MCF 10A (cell line): ENCODE measurements at regions of chr2 and their contacts with region 1.

Region 1: GRCh38 chr2:58081000-58081399 is 34.4 kb downstream of the VRK2 start:
- DNase-seq: no peak
- H3K4me3 Mint-ChIP-seq: no peak overlapping the region
- H3K27ac Mint-ChIP-seq: no peak overlapping the region
- H3K4me1 Mint-ChIP-seq: peaks cover 9% of the 10 kb centered on the region
- H3K27me3 Mint-ChIP-seq: no peaks in the 10 kb centered on the region
- CTCF ChIP-seq: no peak

Region 2: DNA sequence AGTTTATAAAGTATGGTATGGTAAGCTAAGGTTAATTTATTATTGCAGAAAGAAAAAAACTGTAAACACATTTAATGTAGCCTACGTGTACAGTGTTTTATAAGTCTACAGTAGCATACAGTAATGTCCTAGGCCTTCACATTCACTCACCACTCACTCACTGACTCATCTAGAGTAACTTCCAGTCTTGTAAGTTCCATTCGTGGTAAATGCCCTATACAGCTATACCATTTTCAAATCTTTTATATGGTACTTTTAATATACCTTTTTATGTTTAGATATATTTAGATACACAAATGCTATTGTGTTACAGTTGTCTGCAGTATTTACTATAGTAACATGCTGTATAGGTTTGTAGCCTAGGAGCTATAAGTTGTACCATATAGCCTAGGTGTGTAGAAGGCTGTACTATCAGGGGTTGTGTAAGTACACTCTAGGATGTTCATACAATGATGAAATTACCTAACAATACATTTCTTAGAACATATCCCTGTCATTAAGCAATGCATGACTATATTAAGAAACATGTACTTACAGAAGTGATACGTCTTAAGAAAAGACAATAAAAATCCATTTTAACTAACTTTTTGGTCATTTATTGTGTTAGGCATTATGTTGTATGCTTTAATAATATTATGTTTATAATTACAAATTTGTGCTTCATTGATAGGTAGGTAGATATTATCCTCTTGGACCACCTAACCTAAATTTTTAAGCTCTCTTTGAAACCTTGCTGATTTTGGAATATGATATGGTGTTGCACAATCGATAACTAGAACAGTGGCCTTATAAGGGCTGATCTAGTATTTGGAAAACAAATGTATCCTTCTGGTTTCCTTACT is 17.5 kb after region 1 on chr2:
- CTCF ChIA-PET with region 1: no interaction called
- POLR2A ChIA-PET with region 1: interaction called, 10 read pairs
- intact Hi-C with region 1: no loop called
- DNase-seq: peak; percentile 67
- H3K4me3 Mint-ChIP-seq: no peak overlapping the region
- H3K27ac Mint-ChIP-seq: peak overlapping the region; percentile 59
- H3K4me1 Mint-ChIP-seq: peaks cover 17% of the 10 kb centered on the region
- H3K27me3 Mint-ChIP-seq: no peaks in the 10 kb centered on the region
- CTCF ChIP-seq: no peak